Activated CD4-positive, alpha-beta T cell treated with anti-CD3 and anti-CD28 coated beads, Interleukin-2, amount 10 ng/mL, durations not matched to agents 24 days and 14 days (primary cell): ENCODE measurements at regions of chr5 and their contacts with region 1.

Region 1: DNA sequence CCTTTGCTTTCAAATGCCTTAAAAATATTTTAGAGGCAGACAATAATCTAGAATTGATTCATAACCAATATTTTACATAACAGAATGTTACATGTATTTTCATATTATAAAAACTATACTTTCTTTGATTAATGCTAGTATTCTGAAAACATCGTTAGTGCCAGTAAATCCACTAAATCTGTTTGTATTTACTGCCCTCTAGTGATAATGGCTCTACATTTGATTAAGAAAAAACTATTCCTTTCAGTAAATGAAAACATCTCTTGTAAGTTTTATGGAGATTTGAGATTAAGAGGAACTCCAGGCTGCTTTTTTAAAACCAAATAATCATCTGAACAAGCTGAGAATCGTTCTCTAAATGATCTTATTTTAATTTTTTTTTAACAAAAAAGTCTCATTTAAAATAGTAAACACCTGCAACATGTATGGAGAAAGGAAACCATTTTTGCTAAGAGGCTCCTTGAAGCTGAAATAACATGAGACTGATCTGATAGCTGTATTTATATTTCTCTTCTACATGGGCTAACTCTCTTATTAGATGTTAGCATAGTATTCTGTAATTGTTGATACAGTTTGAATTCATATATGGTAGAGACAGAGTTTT is 424.7 kb downstream of the RAB3C start:
- DNase-seq: no peak
- H3K4me3 Mint-ChIP-seq: no peak overlapping the region
- H3K27ac Mint-ChIP-seq: no peak overlapping the region
- H3K4me1 Mint-ChIP-seq: peaks cover 55% of the 10 kb centered on the region
- H3K27me3 Mint-ChIP-seq: no peaks in the 10 kb centered on the region

Region 2: DNA sequence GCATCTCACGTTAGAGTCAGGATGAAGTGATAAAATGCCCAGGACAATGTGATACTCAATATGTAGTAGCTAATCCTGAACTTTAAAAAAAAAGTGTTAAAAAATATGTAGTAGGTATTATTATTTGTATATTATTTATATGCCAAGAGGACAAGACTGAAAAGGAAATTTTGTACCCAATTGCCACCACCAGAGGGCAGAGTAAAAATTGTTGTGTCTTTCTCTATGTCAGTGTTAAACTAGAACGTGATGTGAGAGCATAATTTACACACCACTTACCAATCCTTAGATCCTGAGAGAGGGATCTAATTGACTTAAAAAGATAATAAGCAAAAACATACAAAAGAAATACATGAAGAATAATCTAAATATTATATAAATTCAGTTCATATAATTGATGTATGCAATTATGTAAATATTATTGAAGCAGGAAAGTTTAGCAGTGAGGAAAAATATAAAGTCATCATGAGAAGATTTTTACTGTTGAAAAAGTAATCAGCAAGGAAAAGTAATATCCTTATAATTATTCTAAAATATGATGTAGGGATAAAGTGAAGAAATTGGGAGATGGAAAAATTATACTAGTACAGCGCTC is 135.8 kb before region 1 on chr5:
- intact Hi-C with region 1: loop called (anchors 5 kb)
- DNase-seq: peak; percentile 77
- H3K4me3 Mint-ChIP-seq: no peak overlapping the region
- H3K27ac Mint-ChIP-seq: no peak overlapping the region
- H3K4me1 Mint-ChIP-seq: no peaks in the 10 kb centered on the region
- H3K27me3 Mint-ChIP-seq: peaks cover 40% of the 10 kb centered on the region

Region 3: GRCh38 chr5:58993461-58993860 is 14.1 kb before region 1 on chr5:
- intact Hi-C with region 1: loop called (anchors 2 kb)
- DNase-seq: no peak
- H3K4me3 Mint-ChIP-seq: no peak overlapping the region
- H3K27ac Mint-ChIP-seq: peak overlapping the region; percentile 32
- H3K4me1 Mint-ChIP-seq: peaks cover 15% of the 10 kb centered on the region
- H3K27me3 Mint-ChIP-seq: no peaks in the 10 kb centered on the region

Region 4: DNA sequence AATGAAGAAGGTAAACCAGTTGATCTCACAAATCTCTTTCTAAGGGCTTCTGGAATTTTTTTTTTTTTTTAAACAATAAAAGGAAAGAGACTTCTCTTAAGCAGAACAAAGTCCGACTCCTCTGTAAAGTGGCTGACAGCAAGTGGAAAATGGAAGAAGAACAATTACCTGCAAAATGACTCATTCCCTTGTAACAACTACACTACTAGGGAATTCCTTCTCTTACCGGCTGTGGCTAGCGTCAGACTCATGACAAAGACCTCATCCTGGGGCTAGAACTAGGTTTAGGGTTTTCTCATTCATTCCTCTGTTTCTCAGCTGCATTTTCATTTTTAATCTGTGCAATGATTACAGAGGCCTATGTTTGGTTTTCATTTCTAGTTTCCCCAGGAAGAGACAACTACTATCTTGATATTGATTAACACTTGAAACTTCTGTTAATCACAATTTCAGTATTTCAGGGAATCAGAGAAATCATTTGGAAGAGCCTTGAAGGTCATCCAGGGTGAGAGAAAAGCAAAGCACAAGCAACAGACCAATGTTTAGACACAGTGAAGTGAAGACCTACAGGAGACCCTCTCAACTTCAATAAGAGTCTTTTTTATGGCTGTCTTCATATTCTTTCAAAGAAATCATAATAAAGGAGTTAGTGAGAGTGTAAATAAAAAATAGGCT is 13.2 kb after region 1 on chr5:
- intact Hi-C with region 1: loop called (anchors 1 kb)
- DNase-seq: peak; percentile 66
- H3K4me3 Mint-ChIP-seq: peak overlapping the region; percentile 67
- H3K27ac Mint-ChIP-seq: peak overlapping the region; percentile 93
- H3K4me1 Mint-ChIP-seq: peaks cover 64% of the 10 kb centered on the region
- H3K27me3 Mint-ChIP-seq: no peaks in the 10 kb centered on the region